Heart right ventricle (tissue), 16 donors: ENCODE measurements at regions of chr3 and their contacts with region 1.

Region 1: GRCh38 chr3:48465531-48466378 is 19.2 kb downstream of the ATRIP start:
- DNase-seq: peak; percentile 93 to 99
- ATAC-seq: peak; percentile 92 to 96 (median 94)
- H3K4me3 ChIP-seq: peak overlapping the region; percentile 34 to 72 (median 65)
- H3K27ac ChIP-seq: peak overlapping the region; percentile 89 to 99 (median 98)
- H3K4me1 ChIP-seq: peaks cover 22 to 65% (median 57%) of the 10 kb centered on the region in 9 donors
- H3K27me3 ChIP-seq: no peaks in the 10 kb centered on the region
- CTCF ChIP-seq: peak; percentile 56 to 92 (median 73)

Region 2: GRCh38 chr3:47583320-47584075 is 882.3 kb before region 1 on chr3:
- intact Hi-C with region 1: no loop called
- DNase-seq: no peak
- ATAC-seq: no peak
- H3K4me3 ChIP-seq: no peak overlapping the region
- H3K27ac ChIP-seq: no peak overlapping the region
- H3K4me1 ChIP-seq: peaks cover 0 to 6% (median 4%) of the 10 kb centered on the region in 9 donors
- H3K27me3 ChIP-seq: peaks cover 0 to 19% (median 7%) of the 10 kb centered on the region in 7 donors
- CTCF ChIP-seq: no peak

Region 3: DNA sequence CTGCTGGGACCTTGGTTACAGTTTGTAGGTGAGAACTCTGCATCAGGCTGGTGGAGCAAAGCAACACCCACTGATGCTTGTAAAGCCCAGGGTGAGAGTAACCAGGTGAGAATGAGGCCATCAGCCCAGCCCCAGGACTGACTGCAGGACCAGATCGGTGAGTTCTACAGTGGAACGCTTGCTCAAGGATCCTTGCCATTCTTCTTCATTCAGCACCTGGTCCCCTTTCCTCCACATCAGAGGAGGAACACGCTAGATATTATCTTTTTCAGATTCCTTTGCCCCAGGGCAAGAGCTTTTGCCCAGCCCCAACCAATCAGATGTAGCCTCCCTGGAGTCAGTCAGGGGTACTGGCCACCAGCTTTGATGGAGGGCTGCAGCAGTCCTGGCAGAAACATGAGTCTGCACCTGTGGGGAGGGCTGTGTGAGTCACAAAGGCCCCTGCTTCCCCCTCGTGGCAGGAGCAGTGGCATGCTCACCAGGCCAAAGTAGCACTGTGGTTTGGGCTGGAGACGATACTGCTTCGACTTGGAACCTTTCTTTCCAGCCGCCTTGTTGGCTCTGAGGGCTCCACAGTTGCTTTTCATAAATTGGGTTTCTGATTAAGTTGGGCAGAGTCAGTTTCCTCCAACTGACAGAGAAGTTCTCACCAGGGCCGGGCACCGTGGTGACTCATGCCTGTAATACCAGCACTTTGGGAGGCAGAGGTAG is 41.8 kb after region 1 on chr3:
- intact Hi-C with region 1: loop called in 9 of 10 experiments (anchors 1 to 5 kb)
- DNase-seq: peak; percentile 39 to 40
- ATAC-seq: peak in 3 of 8 donors; percentile 25 to 47 (median 40)
- H3K4me3 ChIP-seq: no peak overlapping the region
- H3K27ac ChIP-seq: peak overlapping the region in 4 of 10 donors; percentile 15 to 50 (median 28)
- H3K4me1 ChIP-seq: peaks cover 8 to 39% (median 20%) of the 10 kb centered on the region in 9 donors
- H3K27me3 ChIP-seq: no peaks in the 10 kb centered on the region
- CTCF ChIP-seq: peak in 7 of 9 donors; percentile 43 to 69 (median 54)

Region 4: GRCh38 chr3:48514436-48515227 is 48.9 kb after region 1 on chr3:
- intact Hi-C with region 1: loop called in 2 of 10 experiments (anchors 5 kb)
- DNase-seq: no peak
- ATAC-seq: no peak
- H3K4me3 ChIP-seq: no peak overlapping the region
- H3K27ac ChIP-seq: no peak overlapping the region
- H3K4me1 ChIP-seq: peaks cover 0 to 4% (median 0%) of the 10 kb centered on the region in 9 donors
- H3K27me3 ChIP-seq: no peaks in the 10 kb centered on the region
- CTCF ChIP-seq: no peak

Region 5: DNA sequence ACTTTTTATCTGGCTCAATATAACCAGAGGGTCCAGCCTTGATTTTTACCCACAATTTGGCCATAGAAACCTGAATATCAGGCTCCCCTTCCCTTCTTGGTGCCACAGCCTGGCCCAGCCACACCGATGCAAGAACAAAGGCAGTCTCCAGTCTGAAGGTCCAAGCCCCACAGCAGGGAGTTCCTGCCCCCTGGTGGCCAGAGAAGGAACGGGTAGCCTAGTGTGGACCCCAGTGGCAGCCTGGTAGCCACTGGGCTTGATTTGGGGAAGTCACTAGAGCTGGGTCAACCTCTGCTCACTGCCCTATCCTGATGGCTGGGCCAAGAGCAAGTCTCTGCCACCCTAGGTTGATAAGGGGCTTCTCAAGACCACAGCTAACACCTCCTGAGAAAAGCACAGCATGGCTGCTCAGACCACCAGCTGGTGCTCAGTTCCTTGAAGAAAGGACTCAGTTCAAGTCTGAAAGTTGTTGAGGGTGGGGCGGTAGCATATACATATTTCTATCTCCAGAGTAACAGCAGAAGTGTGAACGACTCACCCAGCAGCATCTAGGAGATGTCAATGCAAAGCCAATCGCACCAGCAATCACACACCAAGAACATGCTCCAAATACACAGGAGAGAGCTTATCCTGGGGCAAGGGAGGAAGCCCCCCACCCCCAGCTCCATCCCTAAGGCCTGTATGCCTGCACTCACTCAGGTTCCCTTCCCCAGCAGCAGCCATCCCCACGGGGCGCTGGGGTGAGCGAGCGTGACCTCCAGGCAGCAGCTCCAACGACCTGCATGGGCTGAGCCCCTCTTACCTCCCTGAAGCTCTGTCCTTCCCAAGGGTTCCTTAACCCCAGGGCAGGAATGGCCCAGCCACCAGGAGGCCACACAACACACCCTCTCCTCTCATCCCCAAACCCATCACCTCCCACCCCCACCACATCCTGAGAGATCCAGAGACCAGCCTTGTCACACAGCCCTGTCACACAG is 83.3 kb after region 1 on chr3:
- intact Hi-C with region 1: loop called (anchors 1 to 5 kb)
- DNase-seq: peak; percentile 86 to 87
- ATAC-seq: peak; percentile 83 to 97 (median 94)
- H3K4me3 ChIP-seq: no peak overlapping the region
- H3K27ac ChIP-seq: no peak overlapping the region
- H3K4me1 ChIP-seq: peaks cover 0 to 38% (median 5%) of the 10 kb centered on the region in 9 donors
- H3K27me3 ChIP-seq: no peaks in the 10 kb centered on the region
- CTCF ChIP-seq: peak; percentile 92 to 98 (median 95)

Region 6: DNA sequence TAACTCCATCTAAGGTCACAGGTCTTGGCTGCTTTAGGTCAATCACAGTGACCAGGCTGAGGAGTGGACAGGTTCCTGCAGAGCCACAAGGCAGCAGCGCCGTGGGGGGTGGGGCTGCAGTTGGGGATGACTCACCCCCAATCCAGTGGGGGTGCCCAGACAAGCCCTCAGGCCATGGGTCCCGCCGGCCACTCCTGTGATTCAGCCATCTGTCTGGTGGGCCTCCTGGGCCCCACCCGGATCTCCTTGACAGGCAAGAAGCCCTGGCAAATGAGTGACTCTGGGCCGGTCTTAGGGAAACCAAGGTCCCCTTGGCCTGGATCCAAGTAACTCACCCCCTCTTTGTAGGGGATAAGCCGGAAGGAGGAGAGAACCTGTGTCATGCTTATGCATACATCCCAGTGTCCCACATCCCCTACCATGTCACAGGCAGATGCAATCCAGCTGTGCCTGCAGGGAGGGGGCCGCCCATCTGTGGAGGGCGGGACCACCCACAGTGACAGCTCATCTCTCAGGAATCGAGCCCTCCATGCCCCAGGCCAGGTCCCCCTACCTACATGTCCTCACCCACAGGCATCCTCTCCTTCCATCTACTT is 129.9 kb after region 1 on chr3:
- intact Hi-C with region 1: loop called in 1 of 10 experiments (anchors 5 kb)
- DNase-seq: peak in 1 of 2 donors; percentile 62
- ATAC-seq: peak in 2 of 8 donors; percentile 3 to 9
- H3K4me3 ChIP-seq: peak overlapping the region in 6 of 10 donors; percentile 41 to 55 (median 46)
- H3K27ac ChIP-seq: peak overlapping the region in 6 of 10 donors; percentile 80 to 93 (median 86)
- H3K4me1 ChIP-seq: peaks cover 36 to 67% (median 62%) of the 10 kb centered on the region in 9 donors
- H3K27me3 ChIP-seq: peaks cover 0 to 28% (median 0%) of the 10 kb centered on the region in 7 donors
- CTCF ChIP-seq: no peak

Region 7: GRCh38 chr3:48635222-48636021 is 169.7 kb after region 1 on chr3 and contains the start of gene SLC26A6:
- intact Hi-C with region 1: loop called in 1 of 10 experiments (anchors 10 kb)
- DNase-seq: peak; percentile 97 to 98
- ATAC-seq: peak; percentile 98 to 99 (median 99)
- H3K4me3 ChIP-seq: peak within 1 kb of the TSS; percentile 73 to 99 (median 88)
- H3K27ac ChIP-seq: peak within 1 kb of the TSS; percentile 55 to 91 (median 88)
- H3K4me1 ChIP-seq: peaks cover 5 to 28% (median 21%) of the 10 kb centered on the region in 9 donors
- H3K27me3 ChIP-seq: no peaks in the 10 kb centered on the region
- CTCF ChIP-seq: peak in 8 of 9 donors; percentile 38 to 69 (median 45)
- total RNA-seq, gene SLC26A6: 5.2 to 17.7 (median 10.2) TPM

Region 8: GRCh38 chr3:48685602-48686511 is 220.1 kb after region 1 on chr3 and contains the start of gene NCKIPSD:
- intact Hi-C with region 1: loop called in 1 of 10 experiments (anchors 10 kb)
- DNase-seq: peak; percentile 87 to 94
- ATAC-seq: peak; percentile 85 to 97 (median 93)
- H3K4me3 ChIP-seq: peak within 1 kb of the TSS; percentile 63 to 99 (median 92)
- H3K27ac ChIP-seq: peak within 1 kb of the TSS; percentile 77 to 91 (median 86)
- H3K4me1 ChIP-seq: peaks cover 16 to 44% (median 34%) of the 10 kb centered on the region in 9 donors
- H3K27me3 ChIP-seq: no peaks in the 10 kb centered on the region
- CTCF ChIP-seq: peak; percentile 71 to 95 (median 84)
- total RNA-seq, gene NCKIPSD: 9.4 to 21.1 (median 15.1) TPM